ENCODE measurements at regions of chr2 and their contacts with region 1.

Region 1: DNA sequence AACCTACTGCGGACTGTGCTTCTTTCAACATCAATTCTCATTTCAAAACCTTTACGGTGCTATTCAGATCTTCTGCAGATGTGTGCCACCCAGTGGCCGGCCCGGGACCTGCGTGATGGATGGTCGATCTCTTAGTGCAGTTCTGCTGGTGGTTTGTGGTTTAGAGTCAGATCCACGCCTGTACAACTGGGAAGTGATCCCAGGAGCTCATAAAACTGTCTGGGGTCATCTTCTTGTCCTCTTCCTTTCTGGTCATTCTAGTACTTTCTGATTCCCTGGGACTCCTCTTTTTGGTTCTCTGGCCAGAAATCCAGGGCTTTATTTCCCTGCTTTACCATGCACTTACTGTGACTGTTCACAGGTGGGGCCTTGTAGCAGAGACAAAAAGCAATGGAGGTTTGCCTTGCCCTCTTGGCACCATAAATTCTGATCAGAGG is 15.8 kb upstream of the SELENOI start:
- DNase-seq: peak; percentile 93 to 95
- ATAC-seq: peak; percentile 91
- H3K4me3 ChIP-seq: no peak overlapping the region
- H3K27ac ChIP-seq: no peak overlapping the region
- H3K4me1 ChIP-seq: no peaks in the 10 kb centered on the region
- H3K27me3 ChIP-seq: no peaks in the 10 kb centered on the region

Region 2: GRCh38 chr2:26244309-26245121 is 85.6 kb before region 1 on chr2 and contains the starts of genes HADHA and HADHB:
- intact Hi-C with region 1: loop called (anchors 5 to 10 kb)
- DNase-seq: peak; percentile 93 to 95
- ATAC-seq: peak; percentile 97
- H3K4me3 ChIP-seq: peak within 1 kb of the TSS; percentile 78 to 83
- H3K27ac ChIP-seq: peak within 1 kb of the TSS in 1 of 2 donors; percentile 81
- H3K4me1 ChIP-seq: peaks cover 0 to 10% of the 10 kb centered on the region in 2 donors
- H3K27me3 ChIP-seq: no peaks in the 10 kb centered on the region
- total RNA-seq, gene HADHA: 102 to 109 TPM
- total RNA-seq, gene HADHB: 88.1 to 95.7 TPM

Measured in aorta (tissue), 5 donors.